ENCODE measurements at regions of chr9 and their contacts with region 1.

Region 1: DNA sequence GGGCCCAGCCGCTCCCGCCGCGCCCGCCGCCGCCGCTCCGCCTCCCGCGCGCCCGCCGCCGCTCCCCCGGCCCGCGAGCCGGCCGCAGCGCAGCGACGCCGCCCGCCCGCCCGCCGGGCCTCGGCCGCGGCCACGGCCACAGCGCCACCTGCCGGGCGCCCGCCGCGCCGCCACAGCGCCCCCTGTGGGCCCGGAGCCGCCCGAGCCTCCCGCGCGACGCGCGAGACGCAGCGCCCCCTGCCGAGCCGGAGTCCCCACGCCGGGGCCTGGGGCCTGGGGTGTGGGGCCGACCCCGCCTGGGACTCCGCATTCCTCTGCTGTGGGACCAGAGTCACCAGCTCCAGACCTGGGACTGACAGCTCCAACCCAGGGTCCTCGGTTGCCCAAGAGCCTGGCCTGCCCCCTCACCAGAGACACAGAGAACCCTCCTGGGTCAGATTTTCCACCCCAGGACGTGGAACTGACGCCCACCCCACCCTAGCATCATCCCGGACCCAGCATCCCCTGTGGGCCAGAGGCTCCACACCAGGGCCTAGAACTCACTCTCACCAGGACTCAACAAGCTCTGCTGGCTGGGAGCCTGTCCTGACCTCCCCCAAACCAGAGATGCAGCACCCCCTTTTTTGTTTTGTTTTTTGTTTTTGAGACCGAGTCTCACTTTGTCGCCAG is at the start of gene RAPGEF1:
- DNase-seq: no peak
- ATAC-seq: peak; percentile 50
- H3K4me3 ChIP-seq: peak within 1 kb of the TSS; percentile 71
- H3K27ac ChIP-seq: peak within 1 kb of the TSS; percentile 93
- H3K4me1 ChIP-seq: peaks cover 42% of the 10 kb centered on the region
- H3K27me3 ChIP-seq: no peaks in the 10 kb centered on the region
- CTCF ChIP-seq: peak; percentile 74 to 96 (median 76)
- EP300 ChIP-seq: no peak
- POLR2A ChIP-seq: no peak
- RAD21 ChIP-seq: peak; percentile 91
- polyA plus RNA-seq, gene RAPGEF1: 0.42 to 0.60 TPM

Region 2: DNA sequence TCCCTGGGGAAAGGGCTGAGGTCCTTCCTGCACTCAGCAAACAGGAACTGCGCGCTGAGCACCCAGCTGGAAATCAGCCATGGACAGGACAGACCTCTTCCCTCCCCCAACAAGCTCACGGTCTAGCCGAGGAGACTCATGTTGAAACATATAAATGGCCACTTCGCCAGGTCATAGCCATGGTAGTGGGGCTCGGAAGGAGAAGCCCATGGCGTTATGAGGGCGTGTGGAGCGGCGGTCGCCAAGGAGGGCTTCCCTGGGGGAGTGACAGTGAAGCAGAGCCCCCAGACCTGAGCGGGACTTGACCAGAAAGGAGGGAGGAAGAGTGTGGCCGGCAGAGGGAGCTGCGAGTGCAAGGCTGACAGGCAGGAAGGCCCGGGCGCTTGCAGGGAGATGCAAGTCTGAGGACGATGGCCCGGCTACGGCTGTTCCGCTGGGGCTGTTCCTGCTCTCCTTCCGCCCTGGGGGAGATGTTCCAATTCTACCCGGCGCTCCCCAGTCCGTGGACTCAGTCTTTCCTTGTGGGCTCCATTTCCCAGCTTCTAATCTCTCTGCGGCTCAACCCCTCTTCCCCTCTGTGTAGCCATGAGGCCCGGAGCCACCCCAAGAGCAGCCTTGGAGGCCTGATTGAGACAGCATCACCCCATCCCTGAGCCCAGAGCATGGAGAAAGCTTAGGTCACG is 390.1 kb before region 1 on chr9:
- CTCF ChIA-PET with region 1: interaction called, 26 read pairs
- POLR2A ChIA-PET with region 1: no interaction called
- RAD21 ChIA-PET with region 1: interaction called, 4 read pairs
- SMC1A ChIA-PET with region 1: interaction called, 5 read pairs
- in situ Hi-C with region 1: loop called (anchors 5 kb)
- intact Hi-C with region 1: no loop called
- DNase-seq: no peak
- ATAC-seq: peak; percentile 100
- H3K4me3 ChIP-seq: no peak overlapping the region
- H3K27ac ChIP-seq: no peak overlapping the region
- H3K4me1 ChIP-seq: no peaks in the 10 kb centered on the region
- H3K27me3 ChIP-seq: no peaks in the 10 kb centered on the region
- CTCF ChIP-seq: peak; percentile 85 to 91 (median 88)
- EP300 ChIP-seq: no peak
- POLR2A ChIP-seq: no peak
- RAD21 ChIP-seq: peak; percentile 87

Region 3: GRCh38 chr9:131530920-131531832 is 208.9 kb before region 1 on chr9 and contains the start of gene UCK1:
- CTCF ChIA-PET with region 1: no interaction called
- POLR2A ChIA-PET with region 1: no interaction called
- RAD21 ChIA-PET with region 1: no interaction called
- SMC1A ChIA-PET with region 1: no interaction called
- in situ Hi-C with region 1: no loop called
- intact Hi-C with region 1: loop called (anchors 10 kb)
- DNase-seq: peak; percentile 13
- ATAC-seq: peak; percentile 96
- H3K4me3 ChIP-seq: peak within 1 kb of the TSS; percentile 81
- H3K27ac ChIP-seq: peak within 1 kb of the TSS; percentile 65
- H3K4me1 ChIP-seq: peaks cover 4% of the 10 kb centered on the region
- H3K27me3 ChIP-seq: no peaks in the 10 kb centered on the region
- CTCF ChIP-seq: no peak
- EP300 ChIP-seq: no peak
- POLR2A ChIP-seq: peak; percentile 79
- RAD21 ChIP-seq: no peak
- polyA plus RNA-seq, gene UCK1: 0.31 to 0.88 TPM

Region 4: GRCh38 chr9:131621551-131622358 is 118.4 kb before region 1 on chr9:
- CTCF ChIA-PET with region 1: interaction called, 12 read pairs
- POLR2A ChIA-PET with region 1: interaction called, 18 read pairs
- RAD21 ChIA-PET with region 1: interaction called, 34 read pairs
- SMC1A ChIA-PET with region 1: interaction called, 58 read pairs
- in situ Hi-C with region 1: no loop called
- intact Hi-C with region 1: loop called (anchors 5 kb)
- DNase-seq: peak; percentile 73
- ATAC-seq: peak; percentile 76
- H3K4me3 ChIP-seq: peak overlapping the region; percentile 16; the same call in 1 of the 2 replicates
- H3K27ac ChIP-seq: peak overlapping the region; percentile 89
- H3K4me1 ChIP-seq: peaks cover 32% of the 10 kb centered on the region
- H3K27me3 ChIP-seq: no peaks in the 10 kb centered on the region
- CTCF ChIP-seq: peak in 2 of 3 experiments; percentile 7 to 12; a peak in 1 of 6 replicates
- EP300 ChIP-seq: peak; percentile 7 to 44; a peak in 1 of 4 replicates
- POLR2A ChIP-seq: peak; percentile 71
- RAD21 ChIP-seq: no peak

Region 5: GRCh38 chr9:131645078-131645776 is 94.9 kb before region 1 on chr9:
- CTCF ChIA-PET with region 1: interaction called, 8 read pairs
- POLR2A ChIA-PET with region 1: interaction called, 4 read pairs
- RAD21 ChIA-PET with region 1: interaction called, 5 read pairs
- SMC1A ChIA-PET with region 1: interaction called, 14 read pairs
- in situ Hi-C with region 1: no loop called
- intact Hi-C with region 1: no loop called
- DNase-seq: no peak
- ATAC-seq: peak; percentile 68
- H3K4me3 ChIP-seq: no peak overlapping the region
- H3K27ac ChIP-seq: peak overlapping the region; percentile 20
- H3K4me1 ChIP-seq: peaks cover 28% of the 10 kb centered on the region
- H3K27me3 ChIP-seq: no peaks in the 10 kb centered on the region
- CTCF ChIP-seq: no peak
- EP300 ChIP-seq: no peak
- POLR2A ChIP-seq: no peak
- RAD21 ChIP-seq: no peak

Region 6: GRCh38 chr9:131678499-131679111 is 61.5 kb before region 1 on chr9:
- CTCF ChIA-PET with region 1: interaction called, 197 read pairs
- POLR2A ChIA-PET with region 1: interaction called, 271 read pairs
- RAD21 ChIA-PET with region 1: interaction called, 408 read pairs
- SMC1A ChIA-PET with region 1: interaction called, 535 read pairs
- in situ Hi-C with region 1: no loop called
- intact Hi-C with region 1: no loop called
- DNase-seq: peak; percentile 87
- ATAC-seq: peak; percentile 94
- H3K4me3 ChIP-seq: peak overlapping the region; percentile 63; the same call in 1 of the 2 replicates
- H3K27ac ChIP-seq: peak overlapping the region; percentile 87
- H3K4me1 ChIP-seq: peaks cover 50% of the 10 kb centered on the region
- H3K27me3 ChIP-seq: no peaks in the 10 kb centered on the region
- CTCF ChIP-seq: no peak
- EP300 ChIP-seq: peak; percentile 60 to 70; a peak in 3 of 4 replicates
- POLR2A ChIP-seq: peak; percentile 75
- RAD21 ChIP-seq: peak; percentile 25; the same call in 1 of the 2 replicates

Region 7: GRCh38 chr9:131709771-131710454 is 30.2 kb before region 1 on chr9:
- CTCF ChIA-PET with region 1: interaction called, 8 read pairs
- POLR2A ChIA-PET with region 1: interaction called, 291 read pairs
- RAD21 ChIA-PET with region 1: interaction called, 362 read pairs
- SMC1A ChIA-PET with region 1: interaction called, 416 read pairs
- in situ Hi-C with region 1: no loop called
- intact Hi-C with region 1: no loop called
- DNase-seq: peak; percentile 77
- ATAC-seq: peak; percentile 76
- H3K4me3 ChIP-seq: peak overlapping the region; percentile 57
- H3K27ac ChIP-seq: peak overlapping the region; percentile 83
- H3K4me1 ChIP-seq: peaks cover 60% of the 10 kb centered on the region
- H3K27me3 ChIP-seq: no peaks in the 10 kb centered on the region
- CTCF ChIP-seq: 0 out of 6 replicates have a peak, but pooled peaks of 1 of the 3 experiments have one; percentile 8
- EP300 ChIP-seq: peak in 1 of 2 experiments; percentile 82; a peak in 3 of 4 replicates
- POLR2A ChIP-seq: no peak
- RAD21 ChIP-seq: no peak

Measured in GM12878 (cell line).